ENCODE measurements at regions of chr1 and their contacts with region 1.

Region 1: GRCh38 chr1:181142096-181142958 is 53.8 kb downstream of the IER5 start:
- DNase-seq: peak; percentile 94
- ATAC-seq: peak; percentile 92
- H3K4me3 Mint-ChIP-seq: peak overlapping the region; percentile 52
- H3K27ac Mint-ChIP-seq: peak overlapping the region; percentile 70
- H3K4me1 Mint-ChIP-seq: peaks cover 66% of the 10 kb centered on the region
- H3K27me3 Mint-ChIP-seq: peaks cover 13% of the 10 kb centered on the region

Region 2: GRCh38 chr1:180881806-180882509 is 260.4 kb before region 1 on chr1:
- CTCF ChIA-PET with region 1: interaction called, 53 read pairs
- POLR2A ChIA-PET with region 1: no interaction called
- DNase-seq: no peak
- ATAC-seq: no peak
- H3K4me3 Mint-ChIP-seq: no peak overlapping the region
- H3K27ac Mint-ChIP-seq: no peak overlapping the region
- H3K4me1 Mint-ChIP-seq: no peaks in the 10 kb centered on the region
- H3K27me3 Mint-ChIP-seq: no peaks in the 10 kb centered on the region

Region 3: DNA sequence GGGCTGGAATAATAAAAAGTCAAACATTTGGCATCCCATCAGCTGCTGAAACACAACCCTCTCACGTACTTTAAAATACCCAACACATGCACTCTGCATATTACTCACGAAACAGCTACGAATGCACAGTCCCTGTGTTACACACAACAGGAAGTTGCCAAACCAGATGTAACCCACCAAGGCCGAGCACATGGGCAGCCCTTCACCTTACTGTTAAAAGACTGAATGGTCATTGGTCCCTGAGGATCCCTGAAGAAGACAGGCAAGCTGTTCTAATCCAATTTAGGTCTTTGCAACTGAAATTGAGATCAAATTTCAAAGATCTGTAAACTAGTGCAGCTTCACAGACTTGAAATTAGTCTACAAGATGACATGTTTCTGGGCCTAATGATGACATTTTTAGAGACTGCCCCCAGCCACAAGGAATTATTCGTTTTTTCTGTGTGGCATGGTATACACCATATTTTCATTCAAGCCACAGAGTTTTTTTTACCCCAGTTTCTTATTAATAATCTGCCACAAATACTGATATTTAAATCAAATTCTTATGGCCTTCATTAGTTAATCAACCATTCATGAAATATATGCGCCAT is 79.4 kb before region 1 on chr1:
- CTCF ChIA-PET with region 1: interaction called, 31 read pairs
- POLR2A ChIA-PET with region 1: interaction called, 4 read pairs
- DNase-seq: peak; percentile 69
- ATAC-seq: peak; percentile 89
- H3K4me3 Mint-ChIP-seq: peak overlapping the region; percentile 60
- H3K27ac Mint-ChIP-seq: peak overlapping the region; percentile 94
- H3K4me1 Mint-ChIP-seq: peaks cover 22% of the 10 kb centered on the region
- H3K27me3 Mint-ChIP-seq: no peaks in the 10 kb centered on the region

Region 4: DNA sequence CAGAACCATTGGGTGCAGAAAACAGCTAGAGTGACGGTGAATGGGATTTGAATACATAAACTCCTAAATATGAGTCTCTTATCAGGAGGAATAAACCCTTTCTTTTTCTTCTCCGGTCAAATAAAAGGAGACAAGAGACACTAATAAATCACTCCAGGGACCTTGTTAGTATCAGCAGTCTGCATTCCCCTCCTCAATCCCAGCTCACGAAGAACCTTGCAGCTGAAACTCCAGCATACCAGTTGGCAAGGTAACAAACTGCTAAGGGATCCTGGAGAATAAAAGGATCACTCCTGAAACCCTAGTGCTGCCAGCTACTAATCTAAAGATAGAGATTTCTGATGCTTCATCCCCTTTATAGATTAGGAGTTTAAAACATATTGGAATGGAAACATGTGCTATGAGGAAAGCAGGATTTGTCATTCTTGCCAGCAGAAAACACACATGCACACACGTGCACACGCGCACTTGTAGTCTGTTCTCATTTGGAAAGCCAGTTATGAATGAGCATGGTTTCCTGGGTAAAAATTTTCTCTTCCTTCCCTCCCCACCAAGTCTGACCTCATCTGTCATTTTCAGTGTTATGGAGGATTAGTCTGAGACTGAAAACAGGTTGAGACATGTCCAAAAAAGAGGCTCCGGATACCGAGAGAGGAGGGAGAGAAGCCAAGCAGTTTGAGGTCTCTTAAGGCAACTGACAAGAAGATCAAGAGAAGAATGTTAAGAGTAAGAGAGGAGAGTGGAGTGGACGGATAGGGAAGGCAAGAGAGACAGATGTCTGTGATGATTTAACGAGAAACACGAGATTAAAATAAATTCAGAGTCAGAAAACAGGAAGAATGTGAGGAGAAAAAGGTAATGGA is 42.9 kb before region 1 on chr1:
- CTCF ChIA-PET with region 1: interaction called, 395 read pairs
- POLR2A ChIA-PET with region 1: interaction called, 17 read pairs
- DNase-seq: peak; percentile 44
- ATAC-seq: peak; percentile 47
- H3K4me3 Mint-ChIP-seq: peak overlapping the region; percentile 45
- H3K27ac Mint-ChIP-seq: peak overlapping the region; percentile 85
- H3K4me1 Mint-ChIP-seq: peaks cover 86% of the 10 kb centered on the region
- H3K27me3 Mint-ChIP-seq: no peaks in the 10 kb centered on the region

Region 5: GRCh38 chr1:181117638-181118449 is 24.5 kb before region 1 on chr1:
- CTCF ChIA-PET with region 1: interaction called, 17 read pairs
- POLR2A ChIA-PET with region 1: interaction called, 3 read pairs
- DNase-seq: no peak
- ATAC-seq: no peak
- H3K4me3 Mint-ChIP-seq: no peak overlapping the region
- H3K27ac Mint-ChIP-seq: no peak overlapping the region
- H3K4me1 Mint-ChIP-seq: peaks cover 13% of the 10 kb centered on the region
- H3K27me3 Mint-ChIP-seq: peaks cover 4% of the 10 kb centered on the region

Region 6: GRCh38 chr1:181159451-181160140 is 17.3 kb after region 1 on chr1:
- CTCF ChIA-PET with region 1: interaction called, 63 read pairs
- POLR2A ChIA-PET with region 1: interaction called, 5 read pairs
- DNase-seq: peak; percentile 76
- ATAC-seq: peak; percentile 80
- H3K4me3 Mint-ChIP-seq: peak overlapping the region; percentile 70
- H3K27ac Mint-ChIP-seq: peak overlapping the region; percentile 91
- H3K4me1 Mint-ChIP-seq: peaks cover 39% of the 10 kb centered on the region
- H3K27me3 Mint-ChIP-seq: peaks cover 22% of the 10 kb centered on the region

Measured in activated CD8-positive, alpha-beta T cell treated with anti-CD3 and anti-CD28 coated beads, Interleukin-2, amount 10 ng/mL, durations not matched to agents 7 days and 5 days (primary cell).